ENCODE measurements at regions of chr10 and their contacts with region 1.

Region 1: GRCh38 chr10:19518632-19519031 is 297.6 kb upstream of the PLXDC2 start:
- DNase-seq: no peak
- ATAC-seq: no peak

Region 2: DNA sequence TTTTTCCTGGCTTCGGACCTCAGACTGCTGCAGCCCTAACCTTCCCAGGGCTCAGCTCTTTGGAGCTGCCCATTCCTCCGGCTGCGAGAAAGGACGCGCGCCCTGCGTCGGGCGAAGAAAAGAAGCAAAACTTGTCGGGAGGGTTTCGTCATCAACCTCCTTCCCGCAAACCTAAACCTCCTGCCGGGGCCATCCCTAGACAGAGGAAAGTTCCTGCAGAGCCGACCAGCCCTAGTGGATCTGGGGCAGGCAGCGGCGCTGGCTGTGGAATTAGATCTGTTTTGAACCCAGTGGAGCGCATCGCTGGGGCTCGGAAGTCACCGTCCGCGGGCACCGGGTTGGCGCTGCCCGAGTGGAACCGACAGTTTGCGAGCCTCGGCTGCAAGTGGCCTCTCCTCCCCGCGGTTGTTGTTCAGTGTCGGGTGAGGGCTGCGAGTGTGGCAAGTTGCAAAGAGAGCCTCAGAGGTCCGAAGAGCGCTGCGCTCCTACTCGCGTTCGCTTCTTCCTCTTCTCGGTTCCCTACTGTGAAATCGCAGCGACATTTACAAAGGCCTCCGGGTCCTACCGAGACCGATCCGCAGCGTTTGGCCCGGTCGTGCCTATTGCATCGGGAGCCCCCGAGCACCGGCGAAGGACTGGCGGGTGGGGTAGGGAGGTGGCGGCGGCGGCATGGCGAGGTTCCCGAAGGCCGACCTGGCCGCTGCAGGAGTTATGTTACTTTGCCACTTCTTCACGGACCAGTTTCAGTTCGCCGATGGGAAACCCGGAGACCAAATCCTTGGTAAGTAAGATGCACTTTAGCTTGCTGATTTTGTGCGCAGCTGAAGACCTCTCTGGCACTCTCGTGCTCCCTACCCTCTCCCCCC is 298.0 kb after region 1 on chr10 and contains the start of gene PLXDC2:
- intact Hi-C with region 1: no loop called
- DNase-seq: peak; percentile 77
- ATAC-seq: peak; percentile 57
- total RNA-seq, gene PLXDC2: 118 TPM

Region 3: DNA sequence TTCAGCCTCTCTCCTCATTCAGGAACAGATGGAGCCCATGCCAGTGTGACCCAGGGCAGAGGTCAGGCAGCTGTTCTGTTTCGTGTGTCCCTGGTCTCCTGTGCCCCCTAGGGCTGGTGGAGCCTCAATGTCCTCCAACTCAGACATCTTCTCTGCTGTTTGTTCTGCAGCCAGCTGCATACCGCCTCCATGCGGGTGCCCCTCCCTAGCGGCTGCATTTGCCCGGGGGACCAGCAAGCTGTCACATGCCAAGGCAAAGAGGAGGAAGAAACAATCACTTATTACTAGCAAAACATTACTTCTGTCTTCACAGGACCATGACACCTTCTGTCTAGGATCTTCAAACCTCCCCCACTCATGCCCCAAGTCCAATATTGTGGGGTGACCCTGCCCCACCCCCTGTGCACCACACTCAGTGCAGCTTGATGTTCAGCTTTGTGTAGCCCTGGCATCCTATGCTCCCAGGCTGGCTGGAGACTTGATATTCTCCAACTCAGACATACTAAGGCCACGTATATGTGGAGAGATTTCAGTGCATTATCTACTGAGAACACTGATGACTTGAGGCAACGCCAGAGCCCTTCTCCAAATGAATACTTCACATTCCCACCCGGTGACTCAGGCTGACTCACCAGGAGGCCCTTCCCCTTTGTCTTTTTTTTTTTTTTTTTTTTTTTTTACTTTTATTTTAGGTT is 1818.0 kb after region 1 on chr10:
- intact Hi-C with region 1: loop called (anchors 5 kb)
- DNase-seq: no peak
- ATAC-seq: peak; percentile 51